ENCODE measurements at regions of chr4 and their contacts with region 1.

Region 1: DNA sequence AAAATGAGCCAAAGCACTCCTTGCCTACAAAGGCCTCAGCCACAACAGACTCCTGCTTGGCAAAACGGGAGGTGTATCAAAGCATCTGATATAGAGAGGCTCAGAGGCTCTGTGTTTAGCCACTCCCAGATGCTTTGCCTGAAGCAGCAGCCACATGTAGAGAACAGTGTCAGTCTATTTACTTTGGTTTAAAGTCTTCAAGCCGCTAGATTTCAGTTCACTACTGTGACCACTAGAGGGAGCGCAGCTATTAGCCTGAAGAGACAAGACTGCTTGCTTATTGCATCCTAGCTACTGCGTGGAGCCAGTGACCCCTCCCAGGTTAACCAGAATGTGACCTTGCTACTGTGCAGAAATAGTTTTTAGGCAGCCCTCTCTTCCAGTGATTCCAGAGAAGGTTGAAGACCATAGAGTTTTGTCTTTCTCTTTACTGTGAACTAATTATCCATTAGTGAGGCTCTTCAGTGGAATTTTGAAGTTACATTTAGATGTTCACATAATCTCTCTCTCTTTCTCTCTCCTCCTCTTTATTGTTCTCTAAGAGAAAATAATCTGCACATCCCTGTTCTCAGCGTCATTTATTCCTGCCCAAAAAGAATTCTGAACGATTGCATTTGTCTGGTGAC is 39.3 kb downstream of the BMP3 start:
- DNase-seq: peak; percentile 90
- ATAC-seq: peak; percentile 98
- H3K4me3 ChIP-seq: no peak overlapping the region
- H3K27ac ChIP-seq: no peak overlapping the region
- H3K4me1 ChIP-seq: peaks cover 2% of the 10 kb centered on the region; the same call in 1 of the 2 replicates
- H3K27me3 ChIP-seq: no peaks in the 10 kb centered on the region; the same call in 1 of the 2 replicates
- CTCF ChIP-seq: peak; percentile 88
- POLR2A ChIP-seq: no peak
- RAD21 ChIP-seq: peak; percentile 89

Region 2: DNA sequence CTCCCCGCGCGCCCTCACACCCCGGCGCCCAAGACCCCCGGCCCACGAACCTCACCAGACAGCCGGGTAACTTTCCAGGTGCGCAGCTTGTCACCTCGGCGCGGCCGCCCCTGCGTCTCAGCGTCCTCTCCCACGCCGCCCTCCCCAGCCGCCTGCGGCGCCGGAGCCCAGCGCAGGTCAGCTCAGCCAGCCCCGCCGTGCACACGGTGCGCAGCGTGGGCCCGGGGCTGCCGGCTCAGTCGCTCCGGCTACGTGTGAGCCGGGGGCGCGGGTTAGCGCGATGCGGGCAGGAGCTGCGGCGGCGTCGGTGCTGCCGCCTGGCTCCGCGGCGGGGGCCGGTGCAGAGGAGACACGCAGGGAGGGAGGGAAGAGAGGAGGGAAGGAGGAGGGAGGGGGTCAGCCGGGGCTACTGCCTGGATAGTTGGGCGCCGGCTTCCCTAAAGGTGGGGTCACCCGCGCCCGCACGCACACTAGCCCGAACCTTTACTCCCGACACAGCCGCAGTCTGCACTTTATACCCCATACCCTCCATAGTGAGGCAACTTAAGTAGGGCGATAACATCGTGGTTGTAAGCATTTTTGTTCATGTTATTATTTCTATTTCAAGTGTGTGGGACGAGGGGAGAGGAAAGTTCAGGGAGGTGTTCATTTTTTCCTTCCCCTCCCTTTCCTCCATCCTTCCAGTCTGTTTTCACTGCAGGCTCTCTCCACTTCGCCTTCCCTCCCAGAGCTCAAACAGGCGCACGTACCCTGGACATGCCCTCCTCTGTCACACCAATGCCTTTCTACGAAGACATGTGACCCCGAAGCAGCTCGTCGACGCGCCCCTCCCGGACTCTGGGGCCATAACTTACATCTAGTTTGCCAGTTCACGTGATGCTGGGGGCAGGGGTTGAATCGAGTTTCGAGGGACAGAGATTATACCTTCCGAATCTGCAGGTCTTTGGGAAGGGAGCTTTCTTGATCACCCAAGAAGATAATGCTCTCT is 145.4 kb after region 1 on chr4 and contains the start of gene PRKG2:
- CTCF ChIA-PET with region 1: interaction called, 3 read pairs
- POLR2A ChIA-PET with region 1: no interaction called
- dilution Hi-C with region 1: no loop called
- in situ Hi-C with region 1: no loop called
- intact Hi-C with region 1: loop called (anchors 5 kb)
- DNase-seq: no peak
- ATAC-seq: peak; percentile 76
- H3K4me3 ChIP-seq: peak within 1 kb of the TSS; percentile 64
- H3K27ac ChIP-seq: peak within 1 kb of the TSS; percentile 82
- H3K4me1 ChIP-seq: peaks cover 2% of the 10 kb centered on the region; the same call in 1 of the 2 replicates
- H3K27me3 ChIP-seq: peaks cover 2% of the 10 kb centered on the region; the same call in 1 of the 2 replicates
- CTCF ChIP-seq: no peak
- POLR2A ChIP-seq: no peak
- RAD21 ChIP-seq: no peak
- total RNA-seq, gene PRKG2: 2.0 and 2.2 TPM in 2 replicates

Region 3: DNA sequence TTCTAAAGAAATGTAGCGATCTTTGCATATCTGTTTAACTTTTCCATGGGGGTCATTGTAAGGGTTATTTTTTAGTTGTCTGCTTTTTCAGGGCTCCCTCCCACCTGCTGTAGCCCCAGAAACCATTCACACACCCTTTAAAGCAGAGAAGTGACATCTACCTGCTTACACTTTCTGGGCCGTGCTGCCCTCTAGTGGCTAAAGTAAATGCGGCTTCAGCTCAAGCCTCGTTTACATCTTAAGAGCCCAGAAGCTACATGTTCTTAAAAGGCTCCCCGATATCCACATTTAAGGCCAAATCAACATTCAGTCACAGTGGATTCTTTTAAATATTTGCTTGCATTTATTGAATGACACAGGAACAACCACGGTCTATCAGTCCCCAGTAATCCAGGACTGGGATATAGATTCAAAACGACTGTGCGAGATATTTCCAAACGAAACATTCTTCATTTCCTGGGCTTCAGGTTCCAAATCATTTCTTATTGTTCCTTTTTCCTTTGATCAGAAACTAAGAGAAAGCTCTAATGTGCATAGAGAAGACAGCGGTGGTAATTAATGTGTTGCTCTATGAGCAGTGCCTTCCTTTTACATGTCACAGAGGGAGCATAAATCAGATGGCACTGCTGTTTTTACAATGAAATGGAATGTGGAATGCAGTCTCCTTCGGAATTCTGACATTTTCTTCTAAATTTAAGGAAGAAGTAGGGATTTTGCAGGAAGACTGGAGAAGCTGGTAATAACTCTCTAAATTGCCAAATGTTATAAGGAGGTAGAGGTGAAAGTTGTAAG is 282.0 kb after region 1 on chr4:
- CTCF ChIA-PET with region 1: interaction called, 30 read pairs
- POLR2A ChIA-PET with region 1: no interaction called
- dilution Hi-C with region 1: no loop called
- in situ Hi-C with region 1: loop called (anchors 5 kb)
- intact Hi-C with region 1: loop called (anchors 1 kb)
- DNase-seq: peak; percentile 78
- ATAC-seq: peak; percentile 79
- H3K4me3 ChIP-seq: no peak overlapping the region
- H3K27ac ChIP-seq: no peak overlapping the region
- H3K4me1 ChIP-seq: peaks cover 4% of the 10 kb centered on the region
- H3K27me3 ChIP-seq: no peaks in the 10 kb centered on the region
- CTCF ChIP-seq: peak; percentile 91
- POLR2A ChIP-seq: no peak
- RAD21 ChIP-seq: peak; percentile 81

Region 4: GRCh38 chr4:81405894-81406401 is 336.1 kb after region 1 on chr4:
- CTCF ChIA-PET with region 1: interaction called, 3 read pairs
- POLR2A ChIA-PET with region 1: no interaction called
- dilution Hi-C with region 1: no loop called
- in situ Hi-C with region 1: no loop called
- intact Hi-C with region 1: loop called (anchors 1 kb)
- DNase-seq: peak; percentile 77
- ATAC-seq: peak; percentile 77
- H3K4me3 ChIP-seq: no peak overlapping the region
- H3K27ac ChIP-seq: no peak overlapping the region
- H3K4me1 ChIP-seq: no peaks in the 10 kb centered on the region
- H3K27me3 ChIP-seq: no peaks in the 10 kb centered on the region; the same call in none of the 2 replicates
- CTCF ChIP-seq: peak; percentile 72
- POLR2A ChIP-seq: no peak
- RAD21 ChIP-seq: peak; percentile 64

Region 5: DNA sequence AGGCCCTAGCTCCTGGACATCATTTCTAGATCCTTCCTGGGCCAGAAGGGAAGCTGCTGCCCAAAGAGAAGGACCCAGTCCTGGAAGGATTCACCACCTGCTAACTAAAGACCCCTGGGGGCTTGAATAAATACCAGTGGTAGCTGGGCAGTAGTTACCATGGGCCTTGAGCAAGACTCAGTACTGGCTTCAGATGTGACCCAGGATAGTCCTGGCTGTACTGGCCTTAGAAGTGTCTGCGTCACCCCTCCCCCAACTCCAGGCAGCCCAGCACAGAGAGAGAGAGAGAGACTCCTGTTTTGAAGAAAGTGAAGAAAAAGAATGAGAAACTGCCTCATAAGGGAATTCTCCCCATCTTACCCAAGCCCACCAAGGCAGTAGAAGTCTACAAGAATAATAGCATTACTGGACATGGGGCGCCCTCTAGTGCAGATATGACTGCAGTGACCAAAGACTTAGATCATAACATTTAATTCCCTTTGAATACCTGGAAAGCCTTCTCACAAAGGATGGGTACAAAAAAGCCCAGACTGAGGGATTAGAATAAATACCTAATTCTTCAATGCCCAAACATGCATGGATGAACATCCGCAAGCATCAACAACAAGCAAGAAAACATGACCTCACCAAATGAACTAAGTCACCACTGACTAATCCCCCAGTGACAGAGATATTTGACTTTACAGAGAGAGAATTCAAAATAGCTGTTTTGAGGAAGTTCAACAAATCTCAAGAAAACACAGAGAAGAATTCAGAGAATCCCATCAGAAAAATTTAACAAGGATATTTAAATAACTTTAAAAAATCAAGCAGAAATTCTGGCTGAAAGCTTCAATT is 1132.2 kb after region 1 on chr4:
- CTCF ChIA-PET with region 1: no interaction called
- POLR2A ChIA-PET with region 1: no interaction called
- dilution Hi-C with region 1: no loop called
- in situ Hi-C with region 1: no loop called
- intact Hi-C with region 1: loop called (anchors 10 kb)
- DNase-seq: peak; percentile 27
- ATAC-seq: peak; percentile 46; the same call in 1 of the 2 replicates
- H3K4me3 ChIP-seq: no peak overlapping the region
- H3K27ac ChIP-seq: no peak overlapping the region
- H3K4me1 ChIP-seq: no peaks in the 10 kb centered on the region
- H3K27me3 ChIP-seq: no peaks in the 10 kb centered on the region
- CTCF ChIP-seq: peak; percentile 61
- POLR2A ChIP-seq: no peak
- RAD21 ChIP-seq: peak; percentile 80